Activated CD4-positive, alpha-beta memory T cell treated with anti-CD3 and anti-CD28 coated beads, Interleukin-2, amount 10 ng/mL, durations not matched to agents 7 days and 5 days (primary cell): ENCODE measurements at regions of chr3 and their contacts with region 1.

Region 1: GRCh38 chr3:100400780-100401673 is at the starts of genes LNP1 and TOMM70:
- DNase-seq: peak; percentile 95
- H3K4me3 Mint-ChIP-seq: peak within 1 kb of the TSS; percentile 90
- H3K27ac Mint-ChIP-seq: peak within 1 kb of the TSS; percentile 97
- H3K4me1 Mint-ChIP-seq: peaks cover 66% of the 10 kb centered on the region
- H3K27me3 Mint-ChIP-seq: no peaks in the 10 kb centered on the region
- total RNA-seq, gene LNP1: 1.9 to 2.4 TPM
- total RNA-seq, gene TOMM70: 37.4 to 38.8 TPM

Region 2: DNA sequence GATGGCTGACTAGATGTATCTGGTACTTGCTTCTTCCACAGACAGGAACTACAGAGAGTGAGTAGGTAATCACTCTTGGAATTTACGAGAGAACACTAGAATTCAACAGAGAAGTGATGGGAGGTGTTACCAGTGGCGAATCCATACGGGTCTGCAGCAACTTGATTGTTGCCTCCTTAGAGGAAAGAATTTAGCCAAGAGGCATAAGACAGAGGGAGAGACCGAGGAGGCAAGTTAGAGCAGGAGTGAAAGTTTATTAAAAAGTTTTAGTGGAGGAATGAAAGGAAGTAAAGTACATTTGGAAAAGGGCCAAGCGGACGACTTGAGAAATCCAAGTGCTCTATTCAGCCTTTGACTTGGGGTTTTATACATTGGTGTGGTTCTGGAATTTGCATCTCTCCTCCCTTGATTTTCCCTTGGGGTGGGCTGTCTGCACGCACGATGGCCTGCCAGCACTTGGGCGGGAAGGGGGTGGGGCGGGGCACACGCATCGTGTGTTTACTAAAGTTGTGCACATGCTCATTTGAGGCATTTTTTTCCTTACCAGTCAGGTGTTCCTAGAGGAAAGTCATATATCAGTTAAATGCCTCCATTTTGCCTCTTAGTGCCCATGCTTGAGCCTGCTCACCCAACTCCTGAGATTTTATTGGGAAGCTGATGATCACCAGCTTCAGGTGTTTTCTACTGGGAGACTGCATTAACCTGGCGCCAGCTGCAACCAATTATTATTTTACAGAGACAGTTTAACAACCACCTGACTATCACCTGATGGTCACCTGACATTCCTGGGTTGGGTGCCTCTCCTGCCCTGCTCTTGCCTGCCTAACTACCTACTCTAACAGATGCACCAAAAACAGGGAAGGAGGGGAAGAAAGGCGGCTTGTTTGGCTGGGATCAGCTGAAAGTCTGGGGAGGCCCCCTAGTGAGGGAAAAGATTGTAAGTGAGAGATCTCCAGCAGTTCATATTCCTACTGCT is 203.8 kb before region 1 on chr3:
- CTCF ChIA-PET with region 1: no interaction called
- POLR2A ChIA-PET with region 1: no interaction called
- DNase-seq: no peak
- H3K4me3 Mint-ChIP-seq: no peak overlapping the region
- H3K27ac Mint-ChIP-seq: no peak overlapping the region
- H3K4me1 Mint-ChIP-seq: no peaks in the 10 kb centered on the region
- H3K27me3 Mint-ChIP-seq: peaks cover 3% of the 10 kb centered on the region

Region 3: GRCh38 chr3:100260685-100261484 is 140.1 kb before region 1 on chr3 and contains the start of gene TBC1D23:
- CTCF ChIA-PET with region 1: no interaction called
- POLR2A ChIA-PET with region 1: interaction called, 19 read pairs
- DNase-seq: peak; percentile 98
- H3K4me3 Mint-ChIP-seq: peak within 1 kb of the TSS; percentile 96
- H3K27ac Mint-ChIP-seq: peak within 1 kb of the TSS; percentile 84
- H3K4me1 Mint-ChIP-seq: peaks cover 42% of the 10 kb centered on the region
- H3K27me3 Mint-ChIP-seq: no peaks in the 10 kb centered on the region
- total RNA-seq, gene TBC1D23: 26.5 to 29.3 TPM

Region 4: GRCh38 chr3:100334488-100335351 is 66.3 kb before region 1 on chr3 and contains the start of gene NIT2:
- CTCF ChIA-PET with region 1: interaction called, 5 read pairs
- POLR2A ChIA-PET with region 1: interaction called, 44 read pairs
- DNase-seq: peak; percentile 83
- H3K4me3 Mint-ChIP-seq: peak within 1 kb of the TSS; percentile 88
- H3K27ac Mint-ChIP-seq: peak within 1 kb of the TSS; percentile 84
- H3K4me1 Mint-ChIP-seq: peaks cover 23% of the 10 kb centered on the region
- H3K27me3 Mint-ChIP-seq: no peaks in the 10 kb centered on the region
- total RNA-seq, gene NIT2: 36.8 to 38.8 TPM

Region 5: DNA sequence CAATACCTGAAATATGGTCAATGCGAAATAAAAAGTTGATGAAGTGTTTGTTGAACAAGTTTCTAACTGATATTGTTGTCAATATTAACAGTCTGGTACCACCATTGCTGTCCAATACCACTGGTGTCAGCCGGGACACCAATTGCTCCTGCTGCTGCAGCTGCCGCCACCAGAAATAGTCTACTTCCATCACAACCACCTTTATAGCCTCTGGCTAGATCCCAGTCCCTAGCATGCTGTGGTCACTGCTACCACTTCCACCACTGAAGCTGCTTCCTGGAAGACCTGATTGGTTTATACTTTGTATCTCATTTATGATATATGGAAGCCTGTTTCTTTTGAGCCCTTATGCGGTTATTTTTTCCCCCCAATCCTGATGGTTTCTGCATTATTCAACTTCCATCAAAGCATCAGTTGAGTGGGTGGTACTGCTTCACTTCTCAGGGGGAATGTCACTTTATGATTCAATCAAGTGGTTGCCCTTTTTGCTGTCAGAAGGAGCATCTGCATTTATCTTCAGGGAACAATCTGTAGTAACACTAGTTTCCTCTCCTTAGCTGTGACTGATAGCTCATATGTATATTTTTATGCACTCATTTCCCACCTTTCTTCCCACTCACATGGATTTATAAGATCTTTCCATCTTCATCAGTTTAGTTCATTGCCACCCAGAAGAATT is 12.0 kb after region 1 on chr3:
- CTCF ChIA-PET with region 1: no interaction called
- POLR2A ChIA-PET with region 1: interaction called, 10 read pairs
- DNase-seq: no peak
- H3K4me3 Mint-ChIP-seq: no peak overlapping the region
- H3K27ac Mint-ChIP-seq: no peak overlapping the region
- H3K4me1 Mint-ChIP-seq: no peaks in the 10 kb centered on the region
- H3K27me3 Mint-ChIP-seq: no peaks in the 10 kb centered on the region

Region 6: GRCh38 chr3:100708967-100709841 is 308.2 kb after region 1 on chr3 and contains the start of gene TFG:
- CTCF ChIA-PET with region 1: no interaction called
- POLR2A ChIA-PET with region 1: interaction called, 15 read pairs
- DNase-seq: peak; percentile 98
- H3K4me3 Mint-ChIP-seq: peak within 1 kb of the TSS; percentile 74
- H3K27ac Mint-ChIP-seq: peak within 1 kb of the TSS; percentile 87
- H3K4me1 Mint-ChIP-seq: peaks cover 39% of the 10 kb centered on the region
- H3K27me3 Mint-ChIP-seq: no peaks in the 10 kb centered on the region
- total RNA-seq, gene TFG: 56.4 to 56.5 TPM